CD8-positive, alpha-beta T cell (primary cell): ENCODE measurements at regions of chr22 and their contacts with region 1.

Region 1: DNA sequence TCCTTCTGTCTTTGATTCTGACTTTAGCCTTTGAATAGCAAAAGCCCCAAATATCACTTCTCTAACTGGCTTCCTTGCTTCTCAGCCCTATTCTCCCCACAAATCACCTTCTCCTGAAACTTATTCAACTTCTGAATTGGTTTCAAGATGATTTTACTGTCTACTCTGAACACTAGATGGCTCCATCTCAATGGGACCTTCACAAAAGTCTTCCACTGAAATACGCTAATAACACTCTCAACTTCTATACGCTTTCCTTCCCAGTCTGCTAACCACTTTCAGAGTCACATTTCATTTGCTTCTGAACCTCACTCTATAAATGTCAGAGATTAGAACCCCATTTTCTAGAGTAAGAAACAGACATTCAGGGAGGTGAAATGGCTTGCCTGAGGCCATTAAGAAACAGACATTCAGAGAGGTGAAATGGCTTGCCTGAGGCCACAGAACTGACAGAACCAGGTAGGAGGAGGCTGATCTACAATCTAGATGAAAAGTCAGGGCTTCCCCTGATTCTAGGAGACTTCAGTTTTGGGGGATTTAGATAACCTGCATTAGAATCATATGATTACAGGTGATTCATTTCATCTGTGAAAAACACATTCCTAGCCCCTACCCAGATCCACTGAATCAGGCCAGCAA is 20.6 kb downstream of the MORC2 start:
- DNase-seq: peak in 2 of 9 experiments; percentile 52 to 68
- ATAC-seq: peak; percentile 54
- H3K4me3 ChIP-seq: no peak overlapping the region
- H3K4me3 Mint-ChIP-seq: no peak overlapping the region
- H3K27ac ChIP-seq: no peak overlapping the region
- H3K27ac Mint-ChIP-seq: no peak overlapping the region
- H3K4me1 ChIP-seq: peaks cover 58% of the 10 kb centered on the region
- H3K4me1 Mint-ChIP-seq: peaks cover 64% of the 10 kb centered on the region
- H3K27me3 ChIP-seq: no peaks in the 10 kb centered on the region
- H3K27me3 Mint-ChIP-seq: no peaks in the 10 kb centered on the region
- CTCF ChIP-seq: peak; percentile 60

Region 2: GRCh38 chr22:30763815-30764686 is 183.9 kb before region 1 on chr22:
- CTCF ChIA-PET with region 1: interaction called, 4 read pairs
- POLR2A ChIA-PET with region 1: no interaction called
- intact Hi-C with region 1: loop called in 1 of 2 experiments (anchors 1 kb)
- DNase-seq: peak in 8 of 9 experiments; percentile 7 to 78 (median 48)
- ATAC-seq: peak; percentile 90
- H3K4me3 ChIP-seq: no peak overlapping the region
- H3K4me3 Mint-ChIP-seq: no peak overlapping the region
- H3K27ac ChIP-seq: no peak overlapping the region
- H3K27ac Mint-ChIP-seq: no peak overlapping the region
- H3K4me1 ChIP-seq: no peaks in the 10 kb centered on the region
- H3K4me1 Mint-ChIP-seq: peaks cover 2% of the 10 kb centered on the region
- H3K27me3 ChIP-seq: no peaks in the 10 kb centered on the region
- H3K27me3 Mint-ChIP-seq: no peaks in the 10 kb centered on the region
- CTCF ChIP-seq: peak; percentile 52

Region 3: DNA sequence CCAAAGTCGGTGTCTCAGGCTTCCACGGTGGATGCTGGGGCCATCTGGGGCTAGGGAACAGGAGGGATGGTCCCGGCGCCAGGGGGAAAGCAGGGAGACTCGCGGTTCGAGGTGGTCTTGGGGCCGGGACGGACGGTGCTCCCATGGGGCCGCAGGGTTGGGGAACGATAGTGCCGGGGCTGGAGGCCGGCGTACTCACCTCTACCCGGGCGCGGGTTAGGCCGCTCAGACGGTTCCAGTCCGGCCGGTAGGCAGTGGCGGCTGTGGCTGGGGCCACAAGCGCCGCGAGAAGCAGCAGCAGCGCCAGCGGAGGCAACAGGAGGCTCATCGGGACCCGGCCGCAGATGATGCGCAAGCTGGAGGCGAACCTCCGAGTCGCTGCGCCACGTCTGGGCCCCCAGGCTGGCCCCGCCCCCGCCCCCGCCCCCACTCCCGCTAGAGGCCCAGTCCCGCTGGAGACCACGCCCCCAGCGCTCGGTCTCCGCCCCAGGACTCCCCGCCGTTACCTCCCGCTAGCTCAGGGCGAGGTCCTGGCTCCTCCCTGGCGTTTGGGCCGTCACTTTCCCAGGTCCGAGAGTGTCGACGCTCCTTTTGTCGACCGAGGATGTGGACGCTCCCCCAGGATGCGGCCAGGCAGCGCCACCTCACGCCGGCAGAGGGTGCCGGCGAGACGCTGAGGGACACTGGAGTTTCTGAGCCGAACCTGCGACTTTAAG is 159.4 kb after region 1 on chr22 and contains the start of gene SELENOM:
- CTCF ChIA-PET with region 1: interaction called, 4 read pairs
- POLR2A ChIA-PET with region 1: interaction called, 3 read pairs
- intact Hi-C with region 1: loop called in 1 of 2 experiments (anchors 1 kb)
- DNase-seq: peak; percentile 69 to 94 (median 85)
- ATAC-seq: peak; percentile 96
- H3K4me3 ChIP-seq: peak within 1 kb of the TSS; percentile 80 to 84
- H3K4me3 Mint-ChIP-seq: peak within 1 kb of the TSS; percentile 98
- H3K27ac ChIP-seq: peak within 1 kb of the TSS; percentile 72 to 80
- H3K27ac Mint-ChIP-seq: peak within 1 kb of the TSS; percentile 91
- H3K4me1 ChIP-seq: peaks cover 17% of the 10 kb centered on the region
- H3K4me1 Mint-ChIP-seq: peaks cover 25% of the 10 kb centered on the region
- H3K27me3 ChIP-seq: no peaks in the 10 kb centered on the region
- H3K27me3 Mint-ChIP-seq: no peaks in the 10 kb centered on the region
- CTCF ChIP-seq: peak; percentile 70
- total RNA-seq, gene SELENOM: 55.6 to 62.2 TPM

Region 4: DNA sequence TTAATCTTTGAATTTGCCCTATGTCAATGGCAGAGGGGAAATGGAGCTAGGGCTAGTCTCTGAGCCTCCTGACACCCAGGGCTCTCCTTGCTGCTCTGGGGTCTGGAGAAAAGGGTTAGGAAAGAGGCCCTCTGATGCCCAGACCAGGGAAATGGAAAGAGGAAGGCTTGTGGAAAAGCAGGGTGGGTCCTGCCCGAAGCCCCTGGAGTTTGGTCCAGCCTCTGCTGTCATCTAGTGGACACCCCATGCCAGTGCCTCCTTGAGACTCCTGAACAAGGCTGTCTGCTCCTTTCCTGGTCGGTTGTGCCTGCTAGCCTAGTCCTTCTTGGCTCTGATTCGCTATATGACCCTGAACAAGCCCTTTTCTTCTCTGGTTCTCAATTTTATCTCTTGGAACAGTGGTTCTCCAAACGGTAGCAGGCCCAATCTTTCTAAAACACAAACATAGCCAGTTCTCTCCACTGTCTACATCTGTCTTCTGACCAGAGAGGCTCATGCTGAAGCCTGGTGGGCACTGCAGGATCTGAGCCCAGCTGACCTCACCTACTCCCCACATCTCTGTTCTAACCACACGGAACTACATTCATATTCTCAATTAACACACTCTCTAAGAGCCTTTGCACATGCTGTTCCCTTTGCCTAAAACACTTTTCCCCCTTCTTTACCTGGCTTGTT is 201.2 kb after region 1 on chr22:
- CTCF ChIA-PET with region 1: no interaction called
- POLR2A ChIA-PET with region 1: no interaction called
- intact Hi-C with region 1: loop called in 1 of 2 experiments (anchors 10 kb)
- DNase-seq: peak in 5 of 9 experiments; percentile 16 to 53 (median 40)
- ATAC-seq: peak; percentile 56
- H3K4me3 ChIP-seq: no peak overlapping the region
- H3K4me3 Mint-ChIP-seq: no peak overlapping the region
- H3K27ac ChIP-seq: no peak overlapping the region
- H3K27ac Mint-ChIP-seq: no peak overlapping the region
- H3K4me1 ChIP-seq: no peaks in the 10 kb centered on the region
- H3K4me1 Mint-ChIP-seq: no peaks in the 10 kb centered on the region
- H3K27me3 ChIP-seq: no peaks in the 10 kb centered on the region
- H3K27me3 Mint-ChIP-seq: peaks cover 3% of the 10 kb centered on the region
- CTCF ChIP-seq: no peak

Region 5: GRCh38 chr22:31230871-31231621 is 283.1 kb after region 1 on chr22:
- CTCF ChIA-PET with region 1: interaction called, 3 read pairs
- POLR2A ChIA-PET with region 1: no interaction called
- intact Hi-C with region 1: loop called (anchors 1 kb)
- DNase-seq: peak; percentile 16 to 80 (median 56)
- ATAC-seq: peak; percentile 87
- H3K4me3 ChIP-seq: no peak overlapping the region
- H3K4me3 Mint-ChIP-seq: no peak overlapping the region
- H3K27ac ChIP-seq: peak overlapping the region in 1 of 2 experiments; percentile 40
- H3K27ac Mint-ChIP-seq: peak overlapping the region; percentile 92
- H3K4me1 ChIP-seq: peaks cover 25% of the 10 kb centered on the region
- H3K4me1 Mint-ChIP-seq: peaks cover 32% of the 10 kb centered on the region
- H3K27me3 ChIP-seq: no peaks in the 10 kb centered on the region
- H3K27me3 Mint-ChIP-seq: no peaks in the 10 kb centered on the region
- CTCF ChIP-seq: peak; percentile 69

Region 6: GRCh38 chr22:31496007-31496734 is 548.2 kb after region 1 on chr22 and contains the start of gene SFI1:
- CTCF ChIA-PET with region 1: no interaction called
- POLR2A ChIA-PET with region 1: no interaction called
- intact Hi-C with region 1: loop called in 1 of 2 experiments (anchors 10 kb)
- DNase-seq: peak; percentile 93 to 98 (median 96)
- ATAC-seq: peak; percentile 83
- H3K4me3 ChIP-seq: peak within 1 kb of the TSS; percentile 83 to 91
- H3K4me3 Mint-ChIP-seq: peak within 1 kb of the TSS; percentile 95
- H3K27ac ChIP-seq: peak within 1 kb of the TSS; percentile 87 to 90
- H3K27ac Mint-ChIP-seq: peak within 1 kb of the TSS; percentile 99
- H3K4me1 ChIP-seq: peaks cover 27% of the 10 kb centered on the region
- H3K4me1 Mint-ChIP-seq: peaks cover 45% of the 10 kb centered on the region
- H3K27me3 ChIP-seq: no peaks in the 10 kb centered on the region
- H3K27me3 Mint-ChIP-seq: no peaks in the 10 kb centered on the region
- CTCF ChIP-seq: no peak
- total RNA-seq, gene SFI1: 217 to 235 TPM